AG04450 (cell line): ENCODE measurements at regions of chr5 and their contacts with region 1.

Region 1: GRCh38 chr5:14727428-14727865 is 62.9 kb downstream of the OTULIN start:
- DNase-seq: peak; percentile 59
- H3K4me3 ChIP-seq: no peak overlapping the region
- H3K27ac ChIP-seq: no peak overlapping the region
- H3K27me3 ChIP-seq: no peaks in the 10 kb centered on the region
- CTCF ChIP-seq: peak; percentile 97

Region 2: GRCh38 chr5:14685757-14686156 is 41.7 kb before region 1 on chr5:
- CTCF ChIA-PET with region 1: interaction called, 11 read pairs
- POLR2A ChIA-PET with region 1: no interaction called
- DNase-seq: peak; percentile 33
- H3K4me3 ChIP-seq: no peak overlapping the region
- H3K27ac ChIP-seq: no peak overlapping the region
- H3K27me3 ChIP-seq: no peaks in the 10 kb centered on the region
- CTCF ChIP-seq: peak; percentile 82

Region 3: GRCh38 chr5:14739538-14739937 is 12.1 kb after region 1 on chr5:
- CTCF ChIA-PET with region 1: interaction called, 14 read pairs
- POLR2A ChIA-PET with region 1: no interaction called
- DNase-seq: no peak
- H3K4me3 ChIP-seq: no peak overlapping the region
- H3K27ac ChIP-seq: no peak overlapping the region
- H3K27me3 ChIP-seq: no peaks in the 10 kb centered on the region
- CTCF ChIP-seq: no peak

Region 4: GRCh38 chr5:14861123-14861765 is 133.8 kb after region 1 on chr5:
- CTCF ChIA-PET with region 1: interaction called, 10 read pairs
- POLR2A ChIA-PET with region 1: no interaction called
- DNase-seq: no peak
- H3K4me3 ChIP-seq: no peak overlapping the region
- H3K27ac ChIP-seq: no peak overlapping the region
- H3K27me3 ChIP-seq: no peaks in the 10 kb centered on the region
- CTCF ChIP-seq: no peak

Region 5: GRCh38 chr5:14879937-14880589 is 152.6 kb after region 1 on chr5:
- CTCF ChIA-PET with region 1: interaction called, 11 read pairs
- POLR2A ChIA-PET with region 1: no interaction called
- DNase-seq: peak; percentile 32
- H3K4me3 ChIP-seq: no peak overlapping the region
- H3K27ac ChIP-seq: peak overlapping the region; percentile 21
- H3K27me3 ChIP-seq: no peaks in the 10 kb centered on the region
- CTCF ChIP-seq: no peak

Region 6: DNA sequence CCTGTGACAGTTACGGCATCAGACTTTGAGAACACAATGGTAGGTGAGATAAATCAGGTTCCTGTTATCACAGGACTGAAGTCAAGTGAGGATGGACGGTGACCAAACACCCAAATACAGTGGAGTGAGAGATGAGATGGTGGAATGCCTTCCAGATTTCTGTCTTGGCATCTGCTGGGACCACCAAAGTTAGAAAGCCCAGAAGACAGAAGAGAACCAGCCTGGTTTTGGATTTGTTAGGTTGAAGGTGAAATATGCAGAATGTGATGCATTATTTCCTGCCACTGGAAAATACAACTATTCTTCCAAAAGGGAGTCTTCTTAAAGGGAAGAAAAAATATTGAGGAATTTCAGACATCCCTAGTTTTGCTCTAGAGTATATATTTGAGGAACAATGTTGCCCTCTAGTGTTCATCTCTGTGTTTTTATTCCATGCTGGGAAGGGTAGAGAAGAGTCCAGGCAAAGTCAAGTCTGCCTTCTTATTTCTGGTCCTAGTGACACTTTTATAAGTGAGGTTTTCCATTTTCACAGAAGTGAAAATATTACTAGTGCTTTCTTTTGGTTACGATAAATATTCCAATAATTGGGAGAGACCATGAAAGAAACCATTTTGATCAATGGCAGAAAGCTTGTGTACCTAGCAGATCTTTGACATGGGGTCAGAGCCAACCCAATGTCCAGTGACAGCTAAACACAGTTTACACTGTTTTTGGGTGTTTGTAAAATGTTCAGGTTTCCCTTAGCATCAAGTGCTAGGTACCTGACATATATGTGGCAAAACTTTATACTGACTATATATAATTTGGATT is 286.4 kb after region 1 on chr5:
- CTCF ChIA-PET with region 1: interaction called, 63 read pairs
- POLR2A ChIA-PET with region 1: no interaction called
- DNase-seq: peak; percentile 42
- H3K4me3 ChIP-seq: no peak overlapping the region
- H3K27ac ChIP-seq: no peak overlapping the region
- H3K27me3 ChIP-seq: no peaks in the 10 kb centered on the region
- CTCF ChIP-seq: peak; percentile 68

Region 7: DNA sequence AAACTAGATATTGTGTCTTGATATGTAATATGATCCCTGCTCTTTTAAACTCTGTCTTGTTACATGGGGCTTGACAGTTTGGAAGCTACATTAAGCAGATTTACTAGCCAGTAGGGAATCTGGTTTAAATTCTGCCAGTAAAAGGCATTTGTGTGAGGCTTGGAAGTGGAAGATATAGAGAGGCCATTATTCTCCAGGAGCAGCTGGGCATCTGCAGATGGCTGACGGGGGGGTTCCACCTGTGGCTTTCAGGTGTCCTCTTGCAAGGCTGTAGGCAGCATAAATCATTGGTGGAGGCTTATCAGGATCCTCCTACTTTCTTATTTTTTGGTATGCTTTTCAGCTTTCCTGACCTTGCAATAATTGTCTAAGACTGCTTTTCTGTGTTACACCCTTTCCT is 593.4 kb after region 1 on chr5:
- CTCF ChIA-PET with region 1: no interaction called
- POLR2A ChIA-PET with region 1: no interaction called
- DNase-seq: no peak
- H3K4me3 ChIP-seq: no peak overlapping the region
- H3K27ac ChIP-seq: no peak overlapping the region
- H3K27me3 ChIP-seq: no peaks in the 10 kb centered on the region
- CTCF ChIP-seq: no peak